ENCODE measurements at regions of chr16 and their contacts with region 1.

Region 1: DNA sequence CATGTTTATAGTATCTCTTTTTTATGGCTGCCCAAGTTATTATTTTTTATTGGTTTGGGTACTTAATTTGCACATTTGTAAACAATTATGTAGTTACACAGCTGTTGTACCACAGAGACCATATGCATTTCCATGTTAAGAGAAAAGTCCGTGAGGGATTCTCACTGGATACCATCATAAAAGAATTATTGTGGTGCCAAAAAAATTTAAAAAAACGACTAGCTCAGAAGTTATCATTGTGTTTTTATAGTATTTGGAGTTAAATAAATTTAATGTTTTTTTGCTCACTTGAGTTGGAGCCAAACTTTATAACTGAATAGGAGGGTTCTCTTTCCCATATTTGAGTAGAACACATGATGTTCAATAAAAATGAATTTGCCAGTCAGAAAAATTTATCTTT is 618.7 kb downstream of the WWOX start:
- DNase-seq: no peak
- ATAC-seq: no peak
- H3K4me3 ChIP-seq: no peak overlapping the region
- H3K27ac ChIP-seq: no peak overlapping the region
- H3K4me1 ChIP-seq: no peaks in the 10 kb centered on the region
- H3K27me3 ChIP-seq: no peaks in the 10 kb centered on the region
- CTCF ChIP-seq: no peak
- POLR2A ChIP-seq: no peak
- RAD21 ChIP-seq: no peak

Region 2: GRCh38 chr16:78522327-78522726 is 195.8 kb before region 1 on chr16:
- CTCF ChIA-PET with region 1: no interaction called
- POLR2A ChIA-PET with region 1: no interaction called
- RAD21 ChIA-PET with region 1: no interaction called
- intact Hi-C with region 1: loop called (anchors 10 kb)
- DNase-seq: no peak
- ATAC-seq: no peak
- H3K4me3 ChIP-seq: no peak overlapping the region
- H3K27ac ChIP-seq: no peak overlapping the region
- H3K4me1 ChIP-seq: no peaks in the 10 kb centered on the region
- H3K27me3 ChIP-seq: no peaks in the 10 kb centered on the region
- CTCF ChIP-seq: no peak
- POLR2A ChIP-seq: no peak
- RAD21 ChIP-seq: no peak